CD14-positive monocyte (primary cell): ENCODE measurements at regions of chr12 and their contacts with region 1.

Region 1: GRCh38 chr12:108562348-108563135 is at the start of gene ISCU:
- DNase-seq: peak; percentile 96 to 98 (median 98)
- H3K4me3 ChIP-seq: peak within 1 kb of the TSS; percentile 84 to 97 (median 92)
- H3K4me3 Mint-ChIP-seq: peak within 1 kb of the TSS; percentile 100
- H3K27ac ChIP-seq: peak within 1 kb of the TSS; percentile 72 to 95
- H3K27ac Mint-ChIP-seq: peak within 1 kb of the TSS; percentile 98 to 100 (median 100)
- H3K4me1 ChIP-seq: peaks cover 50 to 65% of the 10 kb centered on the region in 2 donors
- H3K4me1 Mint-ChIP-seq: peaks cover 53% of the 10 kb centered on the region
- H3K27me3 ChIP-seq: no peaks in the 10 kb centered on the region
- H3K27me3 Mint-ChIP-seq: peaks cover 0 to 2% (median 0%) of the 10 kb centered on the region in 3 donors
- CTCF ChIP-seq: no peak
- polyA plus RNA-seq, gene ISCU: 90.9 to 114 (median 111) TPM

Region 2: GRCh38 chr12:108618079-108618952 is 55.8 kb after region 1 on chr12:
- intact Hi-C with region 1: loop called (anchors 1 to 2 kb)
- DNase-seq: peak; percentile 68 to 77 (median 76)
- H3K4me3 ChIP-seq: no peak overlapping the region
- H3K4me3 Mint-ChIP-seq: no peak overlapping the region
- H3K27ac ChIP-seq: peak overlapping the region in 1 of 2 donors; percentile 7
- H3K27ac Mint-ChIP-seq: peak overlapping the region; percentile 37 to 94 (median 87)
- H3K4me1 ChIP-seq: peaks cover 48 to 60% of the 10 kb centered on the region in 2 donors
- H3K4me1 Mint-ChIP-seq: peaks cover 50% of the 10 kb centered on the region
- H3K27me3 ChIP-seq: no peaks in the 10 kb centered on the region
- H3K27me3 Mint-ChIP-seq: peaks cover 0 to 2% (median 0%) of the 10 kb centered on the region in 3 donors
- CTCF ChIP-seq: peak; percentile 99

Region 3: GRCh38 chr12:108664338-108665258 is 102.1 kb after region 1 on chr12:
- intact Hi-C with region 1: loop called in 1 of 2 experiments (anchors 2 kb)
- DNase-seq: peak; percentile 95 to 97 (median 95)
- H3K4me3 ChIP-seq: peak overlapping the region; percentile 5 to 67 (median 43)
- H3K4me3 Mint-ChIP-seq: peak overlapping the region; percentile 61 to 86
- H3K27ac ChIP-seq: peak overlapping the region; percentile 88 to 95
- H3K27ac Mint-ChIP-seq: peak overlapping the region; percentile 97 to 99 (median 99)
- H3K4me1 ChIP-seq: peaks cover 54 to 61% of the 10 kb centered on the region in 2 donors
- H3K4me1 Mint-ChIP-seq: peaks cover 59% of the 10 kb centered on the region
- H3K27me3 ChIP-seq: no peaks in the 10 kb centered on the region
- H3K27me3 Mint-ChIP-seq: no peaks in the 10 kb centered on the region
- CTCF ChIP-seq: peak; percentile 93

Region 4: GRCh38 chr12:108803428-108804105 is 241.0 kb after region 1 on chr12:
- intact Hi-C with region 1: loop called (anchors 5 kb)
- DNase-seq: peak; percentile 69 to 81 (median 78)
- H3K4me3 ChIP-seq: no peak overlapping the region
- H3K4me3 Mint-ChIP-seq: no peak overlapping the region
- H3K27ac ChIP-seq: peak overlapping the region in 1 of 2 donors; percentile 4
- H3K27ac Mint-ChIP-seq: peak overlapping the region in 5 of 7 donors; percentile 65 to 90 (median 87)
- H3K4me1 ChIP-seq: peaks cover 3 to 4% of the 10 kb centered on the region in 2 donors
- H3K4me1 Mint-ChIP-seq: peaks cover 4% of the 10 kb centered on the region
- H3K27me3 ChIP-seq: no peaks in the 10 kb centered on the region
- H3K27me3 Mint-ChIP-seq: no peaks in the 10 kb centered on the region
- CTCF ChIP-seq: peak; percentile 90

Region 5: DNA sequence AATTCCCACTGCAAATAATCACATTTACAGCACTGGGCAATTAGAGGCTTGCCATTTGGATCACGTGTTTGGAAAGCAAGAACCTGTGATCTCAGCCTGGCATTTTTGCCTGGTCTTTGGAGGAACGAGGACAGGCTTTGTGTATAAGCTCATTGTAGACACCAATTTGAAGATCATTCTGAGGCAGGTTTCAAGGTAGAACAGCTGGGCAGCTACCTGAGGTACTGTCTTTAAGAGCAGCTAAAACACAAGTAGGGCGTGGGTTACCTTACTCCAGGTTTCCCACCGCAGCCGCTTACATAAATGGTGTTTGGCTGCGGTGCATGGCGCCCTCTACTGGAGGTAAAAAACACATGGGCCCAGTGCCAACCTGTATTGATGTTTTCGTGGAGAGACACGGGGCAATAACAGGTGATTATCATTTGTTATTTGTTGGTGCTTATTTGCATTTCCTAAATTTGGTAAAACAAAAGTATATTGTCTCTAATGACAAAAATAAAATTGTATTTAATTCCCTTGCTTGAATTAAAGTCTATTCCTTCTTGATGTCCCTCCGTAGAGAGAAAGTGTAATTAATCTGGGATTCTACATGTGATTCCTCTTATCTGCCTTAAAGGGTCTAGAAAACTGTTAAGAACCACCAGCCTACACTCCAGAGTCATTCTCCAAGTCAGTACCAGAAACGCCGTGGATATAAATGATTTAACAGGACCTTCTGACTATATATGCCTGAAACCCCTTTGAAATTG is 388.6 kb after region 1 on chr12:
- intact Hi-C with region 1: loop called in 1 of 2 experiments (anchors 10 kb)
- DNase-seq: peak; percentile 61 to 74 (median 66)
- H3K4me3 ChIP-seq: no peak overlapping the region
- H3K4me3 Mint-ChIP-seq: no peak overlapping the region
- H3K27ac ChIP-seq: no peak overlapping the region
- H3K27ac Mint-ChIP-seq: peak overlapping the region in 4 of 7 donors; percentile 18 to 45 (median 30)
- H3K4me1 ChIP-seq: peaks cover 21 to 29% of the 10 kb centered on the region in 2 donors
- H3K4me1 Mint-ChIP-seq: peaks cover 25% of the 10 kb centered on the region
- H3K27me3 ChIP-seq: no peaks in the 10 kb centered on the region
- H3K27me3 Mint-ChIP-seq: peaks cover 7 to 10% (median 10%) of the 10 kb centered on the region in 3 donors
- CTCF ChIP-seq: peak; percentile 97

Region 6: GRCh38 chr12:109093022-109093918 is 530.7 kb after region 1 on chr12 and contains the start of gene ALKBH2:
- intact Hi-C with region 1: loop called (anchors 1 to 2 kb)
- DNase-seq: peak; percentile 94 to 95 (median 95)
- H3K4me3 ChIP-seq: peak within 1 kb of the TSS; percentile 42 to 70 (median 46)
- H3K4me3 Mint-ChIP-seq: peak within 1 kb of the TSS; percentile 77 to 87
- H3K27ac ChIP-seq: peak within 1 kb of the TSS; percentile 13 to 68
- H3K27ac Mint-ChIP-seq: peak within 1 kb of the TSS; percentile 75 to 92 (median 86)
- H3K4me1 ChIP-seq: peaks cover 23 to 28% of the 10 kb centered on the region in 2 donors
- H3K4me1 Mint-ChIP-seq: peaks cover 22% of the 10 kb centered on the region
- H3K27me3 ChIP-seq: no peaks in the 10 kb centered on the region
- H3K27me3 Mint-ChIP-seq: peaks cover 0 to 2% (median 0%) of the 10 kb centered on the region in 3 donors
- CTCF ChIP-seq: peak; percentile 98
- polyA plus RNA-seq, gene ALKBH2: 3.7 to 13.0 (median 4.5) TPM